Mammary epithelial cell (primary cell): ENCODE measurements at regions of chr11 and their contacts with region 1.

Region 1: DNA sequence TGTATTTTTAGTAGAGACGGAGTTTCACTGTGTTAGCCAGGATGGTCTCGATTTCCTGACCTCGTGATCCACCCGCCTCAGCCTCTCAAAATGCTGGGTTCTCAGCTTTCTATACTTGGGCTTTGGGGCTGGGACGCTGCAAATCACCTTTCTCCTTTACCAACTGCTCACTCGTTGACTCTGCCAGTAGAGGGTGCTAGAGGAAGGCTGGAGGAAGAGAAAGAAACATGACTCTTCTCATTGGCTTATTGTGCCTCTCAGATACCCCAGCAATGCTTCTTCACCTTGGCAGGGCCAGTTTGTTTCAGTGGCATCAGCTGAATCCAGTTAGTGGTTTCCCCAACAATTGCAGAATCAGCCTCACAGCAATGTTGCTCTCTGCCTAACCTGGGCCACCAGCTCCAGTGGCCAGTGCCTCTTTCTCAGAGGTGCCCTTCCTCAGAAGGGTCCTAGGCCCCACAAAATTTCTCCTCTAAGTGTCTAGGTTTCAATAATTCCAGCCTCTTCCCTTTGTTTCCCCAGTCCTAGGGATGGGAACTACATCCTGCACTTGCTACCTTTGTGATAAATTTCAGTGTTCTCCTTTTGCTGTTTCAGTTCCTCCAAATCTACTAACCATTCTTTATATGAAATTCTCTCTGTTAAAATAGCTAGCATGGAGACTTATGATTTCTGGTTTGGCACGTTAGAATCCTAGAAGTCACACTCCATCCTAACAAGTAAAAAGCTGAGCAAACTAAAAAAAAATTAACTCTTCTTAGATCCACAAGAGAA is 71.5 kb upstream of the VSTM5 start:
- DNase-seq: peak; percentile 68
- H3K4me3 ChIP-seq: no peak overlapping the region
- H3K27ac ChIP-seq: no peak overlapping the region
- H3K4me1 ChIP-seq: peaks cover 7% of the 10 kb centered on the region
- H3K27me3 ChIP-seq: no peaks in the 10 kb centered on the region
- CTCF ChIP-seq: peak; percentile 89 to 96

Region 2: GRCh38 chr11:94020777-94021481 is 99.0 kb after region 1 on chr11 and contains the start of gene HEPHL1:
- CTCF ChIA-PET with region 1: no interaction called
- dilution Hi-C with region 1: no loop called
- in situ Hi-C with region 1: no loop called
- intact Hi-C with region 1: loop called (anchors 5 kb)
- DNase-seq: peak; percentile 97
- H3K4me3 ChIP-seq: peak within 1 kb of the TSS; percentile 20 to 40 (median 26)
- H3K27ac ChIP-seq: peak within 1 kb of the TSS; percentile 85
- H3K4me1 ChIP-seq: peaks cover 70% of the 10 kb centered on the region
- H3K27me3 ChIP-seq: no peaks in the 10 kb centered on the region
- CTCF ChIP-seq: no peak
- total RNA-seq, gene HEPHL1: 6.2 to 60.8 TPM

Region 3: DNA sequence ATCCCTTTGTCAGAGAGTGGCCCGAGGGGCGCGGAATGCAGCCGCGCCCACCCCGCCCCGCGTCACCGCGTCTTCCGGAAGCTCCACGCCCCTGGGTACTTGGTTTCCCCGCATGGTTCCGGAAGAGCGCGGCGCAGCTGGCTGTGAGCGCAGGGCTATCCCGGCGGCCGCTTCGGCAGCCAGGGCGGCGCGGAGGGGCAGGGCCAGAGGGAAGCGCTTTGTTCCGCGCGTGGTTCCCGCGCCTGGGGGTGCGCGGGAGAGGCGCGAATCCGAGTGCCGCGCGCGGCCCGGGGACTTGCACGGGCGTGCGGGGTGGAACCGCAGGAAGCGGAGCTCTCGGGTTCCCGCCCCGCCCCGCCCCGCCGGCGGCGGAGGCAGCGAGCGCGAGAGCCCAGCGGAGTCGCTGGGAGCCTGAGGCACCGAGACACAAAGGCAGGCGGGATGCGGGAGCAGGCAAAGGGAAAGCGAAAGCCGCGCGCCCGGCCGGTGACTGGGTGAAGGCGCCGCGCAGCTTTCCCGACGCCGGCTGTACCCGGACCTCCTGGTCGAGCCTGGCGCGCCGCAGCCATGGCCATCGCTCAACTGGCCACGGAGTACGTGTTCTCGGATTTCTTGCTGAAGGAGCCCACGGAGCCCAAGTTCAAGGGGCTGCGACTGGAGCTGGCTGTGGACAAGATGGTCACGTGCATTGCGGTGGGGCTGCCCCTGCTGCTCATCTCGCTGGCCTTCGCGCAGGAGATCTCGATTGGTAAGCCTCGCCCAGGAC is 207.0 kb after region 1 on chr11 and contains the start of gene PANX1:
- CTCF ChIA-PET with region 1: interaction called, 3 read pairs
- dilution Hi-C with region 1: no loop called
- in situ Hi-C with region 1: no loop called
- intact Hi-C with region 1: loop called (anchors 1 kb)
- DNase-seq: peak; percentile 91
- H3K4me3 ChIP-seq: peak within 1 kb of the TSS; percentile 56 to 97 (median 56)
- H3K27ac ChIP-seq: peak within 1 kb of the TSS; percentile 92
- H3K4me1 ChIP-seq: peaks cover 48% of the 10 kb centered on the region
- H3K27me3 ChIP-seq: no peaks in the 10 kb centered on the region
- CTCF ChIP-seq: no peak
- total RNA-seq, gene PANX1: 42.1 to 48.2 TPM

Region 4: GRCh38 chr11:94183886-94184264 is 262.0 kb after region 1 on chr11:
- CTCF ChIA-PET with region 1: no interaction called
- dilution Hi-C with region 1: no loop called
- in situ Hi-C with region 1: loop called in 1 of 2 experiments (anchors 10 kb)
- intact Hi-C with region 1: loop called (anchors 1 kb)
- DNase-seq: peak; percentile 48
- H3K4me3 ChIP-seq: no peak overlapping the region
- H3K27ac ChIP-seq: no peak overlapping the region
- H3K4me1 ChIP-seq: no peaks in the 10 kb centered on the region
- H3K27me3 ChIP-seq: no peaks in the 10 kb centered on the region
- CTCF ChIP-seq: peak; percentile 94 to 96

Region 5: DNA sequence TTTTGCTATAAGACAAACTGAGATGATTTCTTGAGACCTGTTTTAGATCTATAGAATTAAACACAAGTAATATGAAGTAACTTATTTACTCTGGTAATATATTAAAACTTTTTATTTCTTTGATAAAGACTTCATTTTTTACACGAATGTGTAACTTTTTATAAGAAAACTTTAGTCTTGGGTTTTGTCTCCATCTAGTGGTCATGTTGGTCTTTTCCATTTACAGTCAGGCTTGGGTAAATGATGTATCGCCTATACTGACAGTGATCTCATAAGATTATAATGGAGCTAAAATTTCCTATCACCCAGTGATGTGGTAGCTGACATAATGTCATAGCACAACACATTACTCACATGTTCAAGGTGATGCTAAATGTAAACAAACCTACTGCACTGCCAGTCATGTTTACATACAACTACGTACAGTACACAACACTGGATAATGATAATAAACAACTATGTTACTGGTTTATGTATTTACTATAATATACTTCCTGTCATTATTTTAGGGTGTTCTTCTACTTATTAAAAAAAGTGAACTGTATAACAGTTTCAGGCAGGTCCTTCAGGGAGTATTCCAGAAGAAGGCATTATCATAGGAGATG is 582.9 kb after region 1 on chr11:
- CTCF ChIA-PET with region 1: no interaction called
- dilution Hi-C with region 1: no loop called
- in situ Hi-C with region 1: no loop called
- intact Hi-C with region 1: loop called (anchors 1 kb)
- DNase-seq: peak; percentile 38
- H3K4me3 ChIP-seq: no peak overlapping the region
- H3K27ac ChIP-seq: no peak overlapping the region
- H3K4me1 ChIP-seq: no peaks in the 10 kb centered on the region
- H3K27me3 ChIP-seq: no peaks in the 10 kb centered on the region
- CTCF ChIP-seq: peak; percentile 62 to 65